Psoas muscle (tissue), 8 donors: ENCODE measurements at regions of chr18 and their contacts with region 1.

Region 1: GRCh38 chr18:42839408-42839807 is 276.1 kb downstream of the RIT2 start:
- DNase-seq: no peak
- ATAC-seq: no peak
- H3K4me3 ChIP-seq: no peak overlapping the region
- H3K27ac ChIP-seq: no peak overlapping the region
- H3K4me1 ChIP-seq: no peaks in the 10 kb centered on the region
- H3K27me3 ChIP-seq: no peaks in the 10 kb centered on the region
- CTCF ChIP-seq: no peak

Region 2: GRCh38 chr18:42893977-42894376 is 54.6 kb after region 1 on chr18:
- intact Hi-C with region 1: loop called in 1 of 2 experiments (anchors 10 kb)
- DNase-seq: no peak
- ATAC-seq: no peak
- H3K4me3 ChIP-seq: no peak overlapping the region
- H3K27ac ChIP-seq: no peak overlapping the region
- H3K4me1 ChIP-seq: no peaks in the 10 kb centered on the region
- H3K27me3 ChIP-seq: no peaks in the 10 kb centered on the region
- CTCF ChIP-seq: no peak